Activated CD4-positive, alpha-beta T cell treated with anti-CD3 and anti-CD28 coated beads for 36 hours (primary cell): ENCODE measurements at regions of chr3 and their contacts with region 1.

Region 1: DNA sequence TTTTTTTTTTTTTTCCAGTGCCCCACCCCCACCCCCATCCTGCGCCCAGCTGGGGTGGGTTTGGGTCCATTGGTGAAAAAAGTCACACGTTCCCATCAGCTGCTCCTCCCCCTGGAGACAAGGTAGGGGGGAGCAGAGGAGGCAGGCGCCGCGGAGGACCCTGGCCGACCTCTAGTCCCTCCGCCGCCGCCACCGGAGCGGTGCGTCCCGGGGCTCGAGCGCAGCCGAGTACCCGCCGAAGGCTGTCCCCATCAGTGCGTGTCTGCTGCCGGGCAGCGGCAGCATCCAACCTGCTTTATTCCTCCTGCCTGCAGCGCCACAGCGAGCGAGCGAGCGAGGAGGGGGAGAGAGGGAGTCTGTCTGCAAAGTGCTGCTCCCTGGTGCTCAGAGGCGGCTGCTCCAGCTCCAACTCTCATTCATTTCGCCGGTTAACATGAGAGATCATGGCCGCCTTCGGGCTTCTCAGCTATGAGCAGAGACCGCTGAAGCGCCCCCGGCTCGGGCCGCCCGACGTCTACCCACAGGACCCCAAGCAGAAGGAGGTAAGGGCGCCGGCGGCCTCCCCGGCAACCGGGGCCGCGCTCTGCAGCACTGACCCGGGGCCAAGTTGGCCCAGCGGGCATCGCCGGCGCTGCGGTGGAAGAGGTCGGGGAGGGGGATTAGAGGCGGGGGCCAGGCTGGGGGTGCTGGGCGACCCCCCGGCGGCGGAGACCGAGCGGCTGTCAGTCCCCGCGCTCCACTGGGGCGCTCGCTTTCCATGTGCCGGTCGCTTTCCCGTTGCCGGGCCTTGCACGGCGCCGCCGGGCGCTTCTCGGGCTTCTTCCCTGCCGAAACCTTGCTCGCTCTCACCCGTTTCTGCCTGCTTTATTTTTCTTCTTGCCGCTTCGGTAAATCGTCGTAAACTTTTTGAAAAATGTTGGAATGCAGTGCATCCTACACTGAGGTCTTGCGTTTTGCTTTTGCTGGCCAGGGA is 1.3 kb downstream of the MED12L start:
- DNase-seq: peak; percentile 89
- ATAC-seq: peak; percentile 91
- H3K4me3 Mint-ChIP-seq: peak overlapping the region; percentile 77
- H3K27ac Mint-ChIP-seq: peak overlapping the region; percentile 13
- H3K4me1 Mint-ChIP-seq: peaks cover 10% of the 10 kb centered on the region
- H3K27me3 Mint-ChIP-seq: peaks cover 36% of the 10 kb centered on the region

Region 2: DNA sequence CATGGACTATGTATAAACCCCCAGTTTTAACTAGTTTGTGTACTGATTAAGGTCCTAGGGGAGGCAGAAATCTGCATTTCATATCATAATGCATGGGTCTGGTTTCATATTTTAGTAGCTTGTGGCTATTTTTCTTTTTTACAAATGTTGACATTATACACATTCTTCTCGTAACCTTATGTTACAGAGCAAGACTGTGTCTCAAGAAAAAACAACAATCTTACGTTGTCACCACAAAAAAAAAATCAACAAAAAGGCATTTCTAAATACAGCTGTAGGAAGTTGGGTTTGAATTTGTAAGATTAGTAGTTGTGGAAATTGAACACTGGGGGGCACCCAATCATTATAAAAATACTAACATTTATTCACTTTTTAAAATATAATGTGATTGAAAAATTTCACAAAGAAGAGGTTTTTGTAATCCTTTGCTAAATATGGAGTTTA is 558.4 kb before region 1 on chr3:
- CTCF ChIA-PET with region 1: no interaction called
- POLR2A ChIA-PET with region 1: no interaction called
- intact Hi-C with region 1: loop called in 1 of 2 experiments (anchors 1 kb)
- DNase-seq: no peak
- ATAC-seq: no peak
- H3K4me3 Mint-ChIP-seq: no peak overlapping the region
- H3K27ac Mint-ChIP-seq: no peak overlapping the region
- H3K4me1 Mint-ChIP-seq: peaks cover 8% of the 10 kb centered on the region
- H3K27me3 Mint-ChIP-seq: peaks cover 2% of the 10 kb centered on the region

Region 3: DNA sequence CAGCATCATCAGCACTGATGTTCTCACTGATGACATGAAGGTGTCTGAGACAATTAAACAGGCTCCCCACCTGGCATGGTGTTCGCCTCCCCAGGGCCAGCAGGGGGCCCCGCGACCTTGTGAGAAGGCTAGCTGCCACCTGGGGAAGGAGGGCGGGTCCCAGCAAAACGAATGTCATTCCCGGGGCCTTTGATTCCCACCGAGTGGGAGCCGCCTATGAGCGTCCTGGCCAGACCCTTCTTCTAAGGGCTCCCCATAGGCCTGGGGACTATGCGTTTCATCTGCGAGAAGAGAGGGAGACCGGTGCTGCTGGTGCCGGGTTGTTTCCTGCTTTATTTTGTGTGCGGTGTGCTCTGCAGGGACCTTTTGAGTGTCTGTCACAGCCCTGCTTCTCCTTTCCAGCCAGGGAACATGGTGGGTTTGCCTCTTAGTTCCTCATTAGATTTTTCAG is 161.0 kb before region 1 on chr3:
- CTCF ChIA-PET with region 1: interaction called, 10 read pairs
- POLR2A ChIA-PET with region 1: no interaction called
- intact Hi-C with region 1: loop called (anchors 1 kb)
- DNase-seq: peak; percentile 80
- ATAC-seq: peak; percentile 93
- H3K4me3 Mint-ChIP-seq: peak overlapping the region; percentile 19
- H3K27ac Mint-ChIP-seq: no peak overlapping the region
- H3K4me1 Mint-ChIP-seq: no peaks in the 10 kb centered on the region
- H3K27me3 Mint-ChIP-seq: peaks cover 7% of the 10 kb centered on the region

Region 4: GRCh38 chr3:151067158-151067557 is 19.6 kb before region 1 on chr3:
- CTCF ChIA-PET with region 1: interaction called, 11 read pairs
- POLR2A ChIA-PET with region 1: no interaction called
- intact Hi-C with region 1: no loop called
- DNase-seq: peak; percentile 17
- ATAC-seq: peak; percentile 36
- H3K4me3 Mint-ChIP-seq: no peak overlapping the region
- H3K27ac Mint-ChIP-seq: no peak overlapping the region
- H3K4me1 Mint-ChIP-seq: no peaks in the 10 kb centered on the region
- H3K27me3 Mint-ChIP-seq: no peaks in the 10 kb centered on the region

Region 5: GRCh38 chr3:151135541-151136337 is 49.0 kb after region 1 on chr3:
- CTCF ChIA-PET with region 1: interaction called, 3 read pairs
- POLR2A ChIA-PET with region 1: no interaction called
- intact Hi-C with region 1: loop called in 1 of 2 experiments (anchors 2 kb)
- DNase-seq: peak; percentile 77
- ATAC-seq: peak; percentile 94
- H3K4me3 Mint-ChIP-seq: peak overlapping the region; percentile 10
- H3K27ac Mint-ChIP-seq: peak overlapping the region; percentile 71
- H3K4me1 Mint-ChIP-seq: peaks cover 20% of the 10 kb centered on the region
- H3K27me3 Mint-ChIP-seq: peaks cover 9% of the 10 kb centered on the region

Region 6: DNA sequence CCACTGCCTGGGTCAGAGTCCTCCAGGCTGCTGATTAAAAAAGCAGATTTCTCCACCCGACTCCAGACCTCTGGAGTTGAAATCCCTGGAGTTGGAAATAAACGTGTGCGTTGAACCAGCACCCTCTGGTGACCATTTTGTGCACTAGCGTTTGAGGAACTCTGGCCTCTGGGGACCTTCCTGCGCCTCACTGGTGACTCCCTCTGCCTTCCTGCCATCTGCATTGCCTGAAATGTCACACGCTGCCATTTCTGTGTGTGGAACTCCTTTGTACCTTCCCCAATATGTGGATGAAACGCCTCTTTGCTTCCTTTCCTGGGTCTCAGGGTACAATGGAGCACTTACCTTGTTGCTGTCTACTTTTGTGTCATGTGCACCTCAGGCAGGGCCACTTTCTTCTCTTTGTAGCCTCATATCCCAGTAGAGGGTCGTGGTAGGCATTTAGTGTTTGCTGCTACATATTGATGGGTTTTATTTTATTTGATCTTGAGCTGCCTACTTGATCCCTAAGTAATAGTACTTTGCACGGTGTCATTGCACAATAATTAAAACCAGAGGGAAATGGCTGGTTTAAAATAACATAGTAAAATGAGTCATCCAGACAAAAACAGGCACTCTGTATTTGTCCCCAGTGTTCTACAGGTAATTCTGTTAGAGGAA is 59.4 kb after region 1 on chr3:
- CTCF ChIA-PET with region 1: interaction called, 4 read pairs
- POLR2A ChIA-PET with region 1: no interaction called
- intact Hi-C with region 1: loop called (anchors 2 to 5 kb)
- DNase-seq: peak; percentile 74
- ATAC-seq: peak; percentile 97
- H3K4me3 Mint-ChIP-seq: no peak overlapping the region
- H3K27ac Mint-ChIP-seq: no peak overlapping the region
- H3K4me1 Mint-ChIP-seq: no peaks in the 10 kb centered on the region
- H3K27me3 Mint-ChIP-seq: peaks cover 3% of the 10 kb centered on the region

Region 7: GRCh38 chr3:151282921-151283320 is 196.2 kb after region 1 on chr3:
- CTCF ChIA-PET with region 1: no interaction called
- POLR2A ChIA-PET with region 1: no interaction called
- intact Hi-C with region 1: loop called in 1 of 2 experiments (anchors 2 kb)
- DNase-seq: no peak
- ATAC-seq: peak; percentile 57
- H3K4me3 Mint-ChIP-seq: no peak overlapping the region
- H3K27ac Mint-ChIP-seq: no peak overlapping the region
- H3K4me1 Mint-ChIP-seq: peaks cover 29% of the 10 kb centered on the region
- H3K27me3 Mint-ChIP-seq: no peaks in the 10 kb centered on the region